Posterior vena cava (tissue), 2 donors: ENCODE measurements at regions of chr7 and their contacts with region 1.

Region 1: GRCh38 chr7:112047421-112047820 is 158.8 kb downstream of the DOCK4 start:
- DNase-seq: no peak

Region 2: GRCh38 chr7:112025556-112025955 is 21.9 kb before region 1 on chr7:
- intact Hi-C with region 1: loop called in 1 of 2 experiments (anchors 1 kb)
- DNase-seq: no peak